Endothelial cell of umbilical vein (primary cell): ENCODE measurements at regions of chr5 and their contacts with region 1.

Region 1: DNA sequence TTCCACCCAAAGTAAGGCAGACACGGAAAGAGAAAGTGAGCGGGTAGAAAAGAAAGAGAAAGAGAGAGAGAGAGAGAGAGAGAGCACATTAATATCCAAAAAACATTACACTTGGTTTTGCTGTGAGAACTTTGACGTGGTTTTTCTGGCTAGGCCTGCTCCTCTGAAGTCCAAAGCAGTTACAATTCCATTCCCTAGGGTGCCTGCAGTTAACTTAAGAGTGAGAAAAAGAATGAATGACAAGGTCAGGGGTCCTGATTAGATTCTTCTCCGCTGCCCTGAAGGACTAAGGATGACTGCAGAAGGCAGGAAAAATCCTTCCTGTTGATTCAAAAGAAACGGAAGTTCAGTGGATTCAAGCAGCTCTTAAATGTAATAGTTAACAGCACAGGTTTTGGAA is 589.8 kb downstream of the PRELID2 start:
- DNase-seq: peak; percentile 57
- H3K4me3 ChIP-seq: peak overlapping the region in 1 of 3 experiments; percentile 16
- H3K27ac ChIP-seq: peak overlapping the region; percentile 91
- H3K4me1 ChIP-seq: peaks cover 28% of the 10 kb centered on the region
- H3K27me3 ChIP-seq: no peaks in the 10 kb centered on the region
- CTCF ChIP-seq: no peak
- POLR2A ChIP-seq: no peak

Region 2: DNA sequence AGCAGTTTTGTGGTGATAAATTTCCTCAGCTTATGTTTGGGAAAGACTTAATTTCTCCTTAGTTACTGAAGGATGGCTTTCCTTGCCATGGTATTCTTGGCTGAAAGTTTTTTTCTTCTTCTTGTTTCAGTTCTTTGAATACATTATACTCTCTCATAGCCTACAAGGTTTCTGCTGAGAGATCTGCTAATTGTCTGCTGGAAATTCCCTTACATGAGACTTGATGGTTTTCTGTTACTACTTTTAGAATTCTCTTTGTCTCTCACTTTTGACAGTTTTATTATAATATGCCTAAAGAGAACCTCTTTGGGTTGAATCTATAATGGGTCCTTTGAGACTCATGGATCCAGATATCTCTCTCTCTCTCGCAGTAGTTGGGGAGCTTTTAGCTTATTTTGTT is 103.8 kb before region 1 on chr5:
- CTCF ChIA-PET with region 1: no interaction called
- POLR2A ChIA-PET with region 1: no interaction called
- dilution Hi-C with region 1: no loop called
- intact Hi-C with region 1: no loop called
- DNase-seq: no peak
- H3K4me3 ChIP-seq: no peak overlapping the region
- H3K27ac ChIP-seq: no peak overlapping the region
- H3K4me1 ChIP-seq: no peaks in the 10 kb centered on the region
- H3K27me3 ChIP-seq: no peaks in the 10 kb centered on the region
- CTCF ChIP-seq: no peak
- POLR2A ChIP-seq: no peak

Region 3: DNA sequence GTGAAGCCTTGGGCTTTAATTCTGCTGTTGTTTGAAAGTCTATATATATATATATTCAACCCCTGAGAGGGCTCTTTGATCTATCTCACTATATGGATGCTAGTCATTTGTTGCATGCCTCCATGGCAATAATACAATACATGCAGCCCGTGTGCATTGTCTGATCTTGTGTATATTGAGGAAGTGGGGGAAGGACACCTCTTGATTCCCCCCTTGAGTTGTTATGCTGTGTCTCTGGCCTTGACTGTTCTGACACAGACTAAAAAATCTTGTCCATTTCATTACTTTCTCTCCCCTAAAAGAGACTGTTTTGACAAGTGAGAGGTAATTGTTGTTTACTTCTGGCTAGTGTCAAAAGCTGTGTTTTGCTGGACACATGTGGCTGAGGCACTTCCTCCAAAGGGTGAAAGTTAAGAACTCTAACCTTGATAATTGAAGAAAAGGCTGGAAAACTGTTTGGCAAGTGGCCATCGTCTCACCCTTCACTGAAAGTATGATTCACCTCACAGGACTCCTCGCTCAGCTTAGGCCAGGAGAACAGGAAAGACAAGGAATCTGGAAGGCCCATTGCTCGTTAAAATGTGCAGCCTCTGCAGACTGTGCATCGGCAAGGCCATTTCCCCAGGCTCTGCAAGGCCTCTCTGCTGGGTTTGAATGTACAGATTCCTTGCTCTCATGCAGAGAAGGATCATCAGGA is 285.8 kb after region 1 on chr5:
- CTCF ChIA-PET with region 1: no interaction called
- POLR2A ChIA-PET with region 1: no interaction called
- dilution Hi-C with region 1: no loop called
- intact Hi-C with region 1: loop called (anchors 1 kb)
- DNase-seq: peak; percentile 95
- H3K4me3 ChIP-seq: no peak overlapping the region
- H3K27ac ChIP-seq: no peak overlapping the region
- H3K4me1 ChIP-seq: peaks cover 16% of the 10 kb centered on the region
- H3K27me3 ChIP-seq: no peaks in the 10 kb centered on the region
- CTCF ChIP-seq: no peak
- POLR2A ChIP-seq: no peak